CD8-positive, alpha-beta T cell (primary cell): ENCODE measurements at regions of chr2 and their contacts with region 1.

Region 1: GRCh38 chr2:58762176-58762781 is 521.2 kb upstream of the FANCL start:
- DNase-seq: peak in 4 of 9 experiments; percentile 1 to 34 (median 12)
- ATAC-seq: no peak
- H3K4me3 ChIP-seq: no peak overlapping the region
- H3K4me3 Mint-ChIP-seq: no peak overlapping the region
- H3K27ac ChIP-seq: no peak overlapping the region
- H3K27ac Mint-ChIP-seq: no peak overlapping the region
- H3K4me1 ChIP-seq: no peaks in the 10 kb centered on the region
- H3K4me1 Mint-ChIP-seq: no peaks in the 10 kb centered on the region
- H3K27me3 ChIP-seq: no peaks in the 10 kb centered on the region
- H3K27me3 Mint-ChIP-seq: peaks cover 3% of the 10 kb centered on the region
- CTCF ChIP-seq: peak; percentile 41

Region 2: DNA sequence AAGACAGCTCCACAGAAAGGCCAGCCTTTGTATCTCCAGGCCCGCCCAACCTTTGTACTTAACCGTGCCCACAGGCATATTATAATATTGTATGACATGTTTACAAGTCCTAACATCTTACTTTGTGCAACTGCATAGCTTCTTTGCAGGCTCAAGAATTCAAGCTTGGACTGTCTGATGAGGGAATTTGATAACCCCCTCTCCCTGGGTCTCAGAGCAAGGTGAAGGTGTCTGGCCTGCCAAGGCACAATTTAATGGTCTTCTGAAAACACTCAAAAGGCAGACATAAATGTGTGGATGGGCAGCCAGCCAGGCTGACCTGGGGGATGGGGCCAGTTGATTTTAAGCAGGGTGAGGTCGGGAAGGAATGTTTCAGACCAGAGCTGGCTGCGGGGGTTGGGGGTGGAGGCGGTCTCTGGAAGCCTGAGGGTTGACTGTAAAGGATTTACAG is 211.6 kb after region 1 on chr2:
- CTCF ChIA-PET with region 1: no interaction called
- POLR2A ChIA-PET with region 1: no interaction called
- intact Hi-C with region 1: no loop called
- DNase-seq: no peak
- ATAC-seq: no peak
- H3K4me3 ChIP-seq: no peak overlapping the region
- H3K4me3 Mint-ChIP-seq: no peak overlapping the region
- H3K27ac ChIP-seq: no peak overlapping the region
- H3K27ac Mint-ChIP-seq: no peak overlapping the region
- H3K4me1 ChIP-seq: no peaks in the 10 kb centered on the region
- H3K4me1 Mint-ChIP-seq: no peaks in the 10 kb centered on the region
- H3K27me3 ChIP-seq: no peaks in the 10 kb centered on the region
- H3K27me3 Mint-ChIP-seq: no peaks in the 10 kb centered on the region
- CTCF ChIP-seq: no peak

Region 3: DNA sequence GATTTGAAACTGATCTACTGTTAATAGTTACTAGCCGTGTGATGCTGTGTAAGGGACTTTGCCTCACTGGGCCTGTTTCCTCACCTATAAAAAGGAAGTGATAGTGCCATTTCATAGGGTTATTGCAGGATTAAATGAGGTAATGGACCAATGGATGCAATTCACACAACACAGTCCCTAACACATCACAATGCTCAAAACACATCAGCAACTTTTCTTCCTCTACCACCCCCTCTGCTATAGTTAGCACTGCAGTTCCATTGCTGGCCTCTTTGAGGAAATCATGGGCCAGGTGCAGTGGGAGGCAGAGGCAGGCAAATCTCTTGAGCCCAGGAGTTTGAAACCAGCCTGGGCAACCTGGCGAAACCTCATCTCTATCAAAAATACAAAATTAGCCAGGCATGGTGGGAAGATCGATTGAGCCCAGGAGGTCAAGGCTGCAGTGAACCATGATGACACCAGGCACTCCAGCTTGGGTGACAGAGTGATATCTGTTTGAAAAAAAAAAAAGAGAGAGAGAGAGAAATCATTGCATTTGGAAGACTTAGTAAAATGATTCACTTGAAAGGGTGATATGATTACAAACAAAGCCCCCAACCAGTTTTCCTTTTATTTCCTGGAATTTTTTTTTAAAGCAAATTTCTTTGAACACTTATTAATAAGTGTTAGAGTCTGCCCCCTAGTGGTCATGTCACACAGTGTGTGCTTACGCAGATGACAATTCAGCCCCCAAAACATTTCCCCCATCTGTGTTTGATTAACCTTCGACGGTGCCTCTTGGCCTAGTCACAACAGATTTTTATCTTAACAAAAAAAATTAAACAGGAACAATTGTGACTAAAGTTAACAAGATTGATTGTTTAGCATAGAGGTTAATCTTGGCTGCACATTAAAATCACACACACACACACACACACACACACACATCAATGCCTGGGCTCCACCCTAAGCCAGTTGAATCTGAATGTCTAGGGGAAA is 1879.8 kb after region 1 on chr2:
- CTCF ChIA-PET with region 1: no interaction called
- POLR2A ChIA-PET with region 1: no interaction called
- intact Hi-C with region 1: loop called in 1 of 2 experiments (anchors 10 kb)
- DNase-seq: peak in 4 of 9 experiments; percentile 20 to 60 (median 40)
- ATAC-seq: no peak
- H3K4me3 ChIP-seq: no peak overlapping the region
- H3K4me3 Mint-ChIP-seq: no peak overlapping the region
- H3K27ac ChIP-seq: no peak overlapping the region
- H3K27ac Mint-ChIP-seq: no peak overlapping the region
- H3K4me1 ChIP-seq: no peaks in the 10 kb centered on the region
- H3K4me1 Mint-ChIP-seq: no peaks in the 10 kb centered on the region
- H3K27me3 ChIP-seq: no peaks in the 10 kb centered on the region
- H3K27me3 Mint-ChIP-seq: peaks cover 2% of the 10 kb centered on the region
- CTCF ChIP-seq: peak; percentile 73

Region 4: DNA sequence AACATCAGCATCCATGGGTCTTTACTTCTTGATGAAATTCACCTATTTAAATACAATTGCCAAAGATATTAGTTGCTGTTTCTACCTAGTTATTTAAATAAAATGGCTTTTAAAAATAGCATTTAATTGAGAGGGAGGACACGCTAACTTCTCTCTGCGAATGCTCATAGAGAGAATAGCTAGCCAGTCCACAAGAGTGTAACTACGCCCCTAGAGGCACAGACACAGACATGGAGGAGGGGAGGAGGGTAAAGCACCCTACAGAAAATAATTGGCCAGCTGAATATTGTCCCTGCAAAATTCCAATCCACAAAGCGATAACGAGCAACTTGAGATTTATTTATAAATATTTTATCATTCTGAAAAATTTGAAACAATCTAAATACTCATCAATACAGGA is 1896.7 kb after region 1 on chr2:
- CTCF ChIA-PET with region 1: no interaction called
- POLR2A ChIA-PET with region 1: no interaction called
- intact Hi-C with region 1: loop called in 1 of 2 experiments (anchors 10 kb)
- DNase-seq: no peak
- ATAC-seq: no peak
- H3K4me3 ChIP-seq: no peak overlapping the region
- H3K4me3 Mint-ChIP-seq: no peak overlapping the region
- H3K27ac ChIP-seq: no peak overlapping the region
- H3K27ac Mint-ChIP-seq: no peak overlapping the region
- H3K4me1 ChIP-seq: no peaks in the 10 kb centered on the region
- H3K4me1 Mint-ChIP-seq: no peaks in the 10 kb centered on the region
- H3K27me3 ChIP-seq: no peaks in the 10 kb centered on the region
- H3K27me3 Mint-ChIP-seq: peaks cover 3% of the 10 kb centered on the region
- CTCF ChIP-seq: no peak